Breast epithelium (tissue), 4 donors: ENCODE measurements at regions of chr20 and their contacts with region 1.

Region 1: DNA sequence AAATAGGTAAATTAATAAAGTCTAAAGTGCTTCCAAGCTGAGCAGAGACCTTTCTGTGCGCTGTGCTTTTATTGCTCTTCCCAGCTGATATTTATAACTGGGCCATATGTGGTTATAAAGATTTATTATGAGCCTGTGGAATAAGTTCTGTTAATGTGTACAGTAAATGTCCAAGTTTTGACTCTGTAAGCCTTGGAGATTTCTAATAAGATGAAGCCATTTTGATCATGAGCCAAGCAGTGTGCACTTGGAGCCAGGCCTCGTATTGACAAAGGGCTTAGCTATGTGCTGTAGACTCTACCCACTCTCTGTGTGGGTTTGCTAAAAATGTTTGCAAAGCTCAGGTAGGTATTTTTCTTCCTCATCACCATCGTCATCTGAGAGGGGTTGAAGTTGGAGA is 361.1 kb downstream of the FOXA2 start:
- DNase-seq: no peak
- H3K4me3 ChIP-seq: no peak overlapping the region
- H3K27ac ChIP-seq: no peak overlapping the region
- H3K4me1 ChIP-seq: no peaks in the 10 kb centered on the region
- H3K27me3 ChIP-seq: no peaks in the 10 kb centered on the region
- CTCF ChIP-seq: no peak
- POLR2A ChIP-seq: no peak

Region 2: DNA sequence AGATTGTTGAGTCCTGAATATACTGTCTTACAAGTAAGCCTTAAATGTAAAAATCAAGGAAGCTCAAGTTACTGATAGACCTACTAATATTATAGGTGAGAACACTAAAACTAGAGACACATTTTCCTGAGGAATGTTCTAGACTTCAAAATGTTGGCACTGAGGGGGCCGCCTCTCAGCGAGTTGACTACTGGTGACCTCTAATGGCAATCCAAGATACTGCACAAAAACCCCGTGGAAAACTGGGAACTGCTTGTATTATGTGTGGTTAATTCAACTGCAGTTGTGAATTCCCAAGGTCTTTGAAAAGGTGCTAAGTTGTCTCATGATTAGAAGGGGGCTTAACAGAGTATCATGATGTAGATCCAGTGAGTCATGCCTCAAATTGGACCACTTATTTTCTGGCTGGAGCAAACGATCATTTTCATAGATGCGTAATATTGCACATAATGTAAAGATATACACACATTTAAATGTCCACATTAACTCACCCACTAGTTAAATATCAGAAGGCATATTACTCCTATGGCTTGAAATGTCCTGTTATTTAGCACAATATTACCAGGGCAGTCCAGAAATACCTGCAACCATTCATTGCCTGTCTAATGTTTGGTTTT is 24.9 kb after region 1 on chr20:
- intact Hi-C with region 1: no loop called
- DNase-seq: no peak
- H3K4me3 ChIP-seq: no peak overlapping the region
- H3K27ac ChIP-seq: no peak overlapping the region
- H3K4me1 ChIP-seq: no peaks in the 10 kb centered on the region
- H3K27me3 ChIP-seq: no peaks in the 10 kb centered on the region
- CTCF ChIP-seq: peak in 1 of 3 donors; percentile 18
- POLR2A ChIP-seq: no peak

Region 3: DNA sequence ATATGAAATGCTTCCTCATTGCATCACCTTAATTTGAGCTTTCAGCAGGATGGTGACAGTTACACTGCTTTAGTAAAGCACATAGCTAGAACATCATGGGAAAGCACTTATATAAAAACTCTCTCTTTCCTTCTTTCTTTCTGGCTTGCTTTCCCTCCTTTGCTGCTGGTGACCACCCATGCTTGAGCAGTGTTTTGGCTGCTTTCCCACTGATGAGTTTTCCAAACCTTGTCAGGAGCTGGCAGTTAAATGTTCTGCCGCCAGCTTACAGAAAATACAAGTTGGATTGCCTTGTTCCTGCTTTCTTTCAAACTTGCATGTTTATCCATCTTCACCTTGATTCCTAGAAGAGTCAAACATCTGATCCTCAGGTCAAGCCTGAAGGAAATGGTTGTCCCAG is 37.3 kb after region 1 on chr20:
- intact Hi-C with region 1: loop called (anchors 2 kb)
- DNase-seq: no peak
- H3K4me3 ChIP-seq: no peak overlapping the region
- H3K27ac ChIP-seq: no peak overlapping the region
- H3K4me1 ChIP-seq: no peaks in the 10 kb centered on the region
- H3K27me3 ChIP-seq: peaks cover 0 to 11% of the 10 kb centered on the region in 2 donors
- CTCF ChIP-seq: no peak
- POLR2A ChIP-seq: no peak

Region 4: DNA sequence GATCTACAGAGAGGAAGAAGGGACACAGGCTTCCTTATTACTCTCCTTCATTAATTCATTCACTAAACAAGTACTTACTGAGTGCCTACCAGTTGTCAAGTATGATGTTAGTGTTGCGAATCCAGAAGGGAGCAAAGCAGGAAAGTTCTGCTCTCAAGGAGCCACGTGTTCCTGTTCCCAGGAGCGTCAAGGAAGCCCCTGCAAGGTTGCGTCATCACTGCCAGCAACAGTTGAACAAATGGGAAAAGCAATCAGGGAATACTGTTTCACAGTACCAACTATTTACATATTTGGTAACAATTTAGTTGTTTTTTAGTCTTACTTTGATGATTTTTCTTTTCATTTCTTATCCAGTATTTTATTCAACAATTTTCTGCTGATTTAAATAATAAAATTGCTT is 51.1 kb after region 1 on chr20:
- intact Hi-C with region 1: no loop called
- DNase-seq: no peak
- H3K4me3 ChIP-seq: no peak overlapping the region
- H3K27ac ChIP-seq: no peak overlapping the region
- H3K4me1 ChIP-seq: no peaks in the 10 kb centered on the region
- H3K27me3 ChIP-seq: no peaks in the 10 kb centered on the region
- CTCF ChIP-seq: no peak
- POLR2A ChIP-seq: no peak